Stomach (tissue), 19 donors: ENCODE measurements at regions of chr15 and their contacts with region 1.

Region 1: DNA sequence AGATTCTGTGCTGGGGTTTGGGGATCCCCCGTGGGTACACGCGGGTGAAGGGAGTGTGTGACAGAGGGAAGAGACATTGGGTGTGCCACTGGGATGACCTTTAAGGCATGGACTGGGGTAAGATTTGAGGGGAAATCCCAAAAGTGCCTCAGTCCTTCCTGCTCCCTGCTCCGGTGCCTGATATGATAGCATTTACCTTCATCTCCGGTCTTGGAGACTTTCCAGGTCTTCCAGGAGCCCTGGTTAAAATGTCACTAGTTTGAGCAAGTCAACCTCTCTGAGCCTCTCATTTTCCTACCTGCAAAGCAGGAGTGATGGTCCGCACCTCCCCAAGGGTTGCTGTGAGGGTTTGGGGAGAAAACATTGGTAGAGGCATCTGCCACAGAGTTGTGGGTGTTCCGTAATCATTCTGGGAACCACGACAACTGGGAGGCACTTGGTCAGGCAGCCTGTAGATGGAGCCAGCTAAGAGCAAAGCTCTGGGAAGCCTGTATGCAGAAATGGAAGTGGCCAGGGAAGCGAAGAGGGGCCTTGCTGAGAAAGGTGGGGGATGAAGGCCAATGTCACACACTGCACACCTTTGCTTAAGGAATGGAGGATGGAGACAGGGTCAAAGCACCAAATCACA is 33.9 kb upstream of the KIF23 start:
- DNase-seq: no peak
- H3K4me3 ChIP-seq: no peak overlapping the region
- H3K27ac ChIP-seq: no peak overlapping the region
- H3K4me1 ChIP-seq: no peaks in the 10 kb centered on the region
- H3K27me3 ChIP-seq: no peaks in the 10 kb centered on the region
- CTCF ChIP-seq: no peak
- EP300 ChIP-seq: no peak
- POLR2A ChIP-seq: no peak

Region 2: GRCh38 chr15:69045808-69046207 is 334.4 kb before region 1 on chr15:
- intact Hi-C with region 1: loop called (anchors 5 kb)
- DNase-seq: no peak
- H3K4me3 ChIP-seq: no peak overlapping the region
- H3K27ac ChIP-seq: no peak overlapping the region
- H3K4me1 ChIP-seq: no peaks in the 10 kb centered on the region
- H3K27me3 ChIP-seq: no peaks in the 10 kb centered on the region
- CTCF ChIP-seq: no peak
- EP300 ChIP-seq: no peak
- POLR2A ChIP-seq: no peak

Region 3: DNA sequence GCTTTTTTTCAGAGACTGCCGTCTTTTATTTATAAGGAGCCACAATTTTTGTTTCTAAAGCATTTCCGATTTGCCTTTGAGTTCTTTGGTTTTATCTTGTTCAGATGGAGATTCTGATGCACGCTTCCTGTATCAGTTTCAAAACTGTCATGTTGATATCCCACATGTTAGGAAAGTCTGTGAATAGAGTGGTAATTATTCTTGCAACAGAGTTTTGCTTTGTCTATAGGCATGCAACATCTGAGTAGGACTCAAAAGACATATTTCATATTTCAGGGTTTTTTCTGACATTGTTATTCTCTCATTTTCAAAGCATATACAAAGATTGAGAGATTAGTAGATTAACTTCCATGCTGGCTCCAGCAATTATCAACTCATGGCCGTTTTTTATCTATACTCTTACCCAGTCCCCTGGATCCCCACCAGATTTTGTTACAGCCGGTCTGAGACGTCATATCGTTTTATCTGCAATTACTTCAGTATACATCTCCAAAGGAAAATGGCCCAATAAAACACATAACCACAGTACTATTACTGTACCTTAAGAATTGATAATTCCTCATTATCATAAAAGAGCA is 59.1 kb before region 1 on chr15:
- intact Hi-C with region 1: no loop called
- DNase-seq: no peak
- H3K4me3 ChIP-seq: no peak overlapping the region
- H3K27ac ChIP-seq: no peak overlapping the region
- H3K4me1 ChIP-seq: no peaks in the 10 kb centered on the region
- H3K27me3 ChIP-seq: no peaks in the 10 kb centered on the region
- CTCF ChIP-seq: no peak
- EP300 ChIP-seq: no peak
- POLR2A ChIP-seq: no peak